BJ (cell line): ENCODE measurements at regions of chr18 and their contacts with region 1.

Region 1: GRCh38 chr18:21191596-21192307 is 50.3 kb upstream of the GREB1L start:
- DNase-seq: no peak
- H3K4me3 ChIP-seq: no peak overlapping the region
- H3K27me3 ChIP-seq: no peaks in the 10 kb centered on the region; the same call in 1 of the 2 replicates
- CTCF ChIP-seq: peak; percentile 89

Region 2: GRCh38 chr18:20963027-20963426 is 228.7 kb before region 1 on chr18:
- CTCF ChIA-PET with region 1: interaction called, 12 read pairs
- POLR2A ChIA-PET with region 1: no interaction called
- DNase-seq: no peak
- H3K4me3 ChIP-seq: no peak overlapping the region
- H3K27me3 ChIP-seq: no peaks in the 10 kb centered on the region
- CTCF ChIP-seq: no peak

Region 3: GRCh38 chr18:21179590-21180220 is 12.0 kb before region 1 on chr18:
- CTCF ChIA-PET with region 1: interaction called, 18 read pairs
- POLR2A ChIA-PET with region 1: no interaction called
- DNase-seq: no peak
- H3K4me3 ChIP-seq: no peak overlapping the region
- H3K27me3 ChIP-seq: no peaks in the 10 kb centered on the region; the same call in 1 of the 2 replicates
- CTCF ChIP-seq: peak; percentile 81

Region 4: DNA sequence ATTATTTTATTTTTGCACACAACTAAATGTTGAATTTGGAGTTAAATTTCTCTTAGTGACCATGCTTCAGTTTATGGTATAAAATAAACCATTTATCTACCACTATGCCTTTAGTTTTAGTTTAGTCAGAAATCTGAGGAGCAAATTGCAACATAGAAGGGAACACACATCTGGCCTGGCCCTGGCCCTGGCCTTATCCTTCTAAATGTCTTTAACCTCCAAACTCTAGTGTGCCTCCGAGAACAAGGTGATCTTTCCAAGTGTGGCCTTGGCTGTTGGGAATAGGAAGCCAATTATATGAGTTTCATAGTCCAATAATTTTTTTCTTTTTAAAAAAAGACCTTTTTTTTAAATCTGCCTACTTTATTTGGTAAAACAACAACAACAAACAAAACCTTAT is 18.5 kb after region 1 on chr18:
- CTCF ChIA-PET with region 1: interaction called, 15 read pairs
- POLR2A ChIA-PET with region 1: no interaction called
- DNase-seq: no peak
- H3K4me3 ChIP-seq: no peak overlapping the region
- H3K27me3 ChIP-seq: no peaks in the 10 kb centered on the region
- CTCF ChIP-seq: no peak

Region 5: GRCh38 chr18:21450913-21451312 is 259.2 kb after region 1 on chr18:
- CTCF ChIA-PET with region 1: interaction called, 207 read pairs
- POLR2A ChIA-PET with region 1: no interaction called
- DNase-seq: no peak
- H3K4me3 ChIP-seq: no peak overlapping the region
- H3K27me3 ChIP-seq: no peaks in the 10 kb centered on the region
- CTCF ChIP-seq: no peak

Region 6: DNA sequence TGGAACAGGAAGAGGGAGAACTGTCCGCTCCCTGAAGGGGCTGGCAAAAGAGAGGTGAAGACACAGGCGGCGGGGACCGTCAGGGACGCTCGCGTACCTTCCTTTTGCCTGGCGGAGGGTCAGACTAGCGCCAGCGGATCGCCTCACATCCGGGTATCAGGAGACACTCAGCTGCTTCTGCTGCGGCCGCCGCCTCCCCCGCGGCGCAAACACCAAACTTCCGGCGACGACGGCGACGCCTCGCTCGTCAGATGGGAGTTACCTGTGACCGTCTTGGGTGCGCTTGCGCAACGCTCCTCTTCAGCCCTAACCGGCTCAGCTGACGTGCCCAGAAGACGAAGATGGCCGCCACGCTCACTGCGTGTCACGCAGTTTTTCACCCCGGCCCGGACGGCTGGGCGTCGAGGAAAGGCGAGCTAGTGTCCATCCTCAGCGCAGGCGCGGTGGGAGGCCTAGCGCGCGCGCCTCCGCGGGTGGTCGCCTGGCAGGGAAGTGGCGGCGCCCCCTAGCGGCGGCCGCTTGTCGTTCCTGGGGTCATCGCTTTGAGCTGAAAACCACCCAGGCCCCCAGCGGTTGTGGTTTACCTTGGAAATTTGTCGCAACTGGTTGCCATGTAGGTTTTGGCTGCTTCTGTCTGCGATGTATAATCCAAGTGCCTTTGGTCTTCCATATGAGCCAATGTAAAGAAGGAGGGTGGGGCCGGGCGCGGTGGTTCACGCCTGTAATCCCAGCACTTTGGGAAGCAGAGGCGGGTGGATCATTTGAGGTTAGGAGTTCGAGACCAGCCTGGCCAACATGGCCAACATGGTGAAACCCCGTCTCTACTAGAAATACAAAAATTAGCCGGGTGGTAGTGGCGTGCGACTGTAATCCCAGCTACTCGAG is 409.0 kb after region 1 on chr18 and contains the start of gene ESCO1:
- CTCF ChIA-PET with region 1: interaction called, 13 read pairs
- POLR2A ChIA-PET with region 1: no interaction called
- DNase-seq: peak; percentile 90
- H3K4me3 ChIP-seq: peak within 1 kb of the TSS; percentile 94
- H3K27me3 ChIP-seq: no peaks in the 10 kb centered on the region
- CTCF ChIP-seq: peak; percentile 84
- polyA plus RNA-seq, gene ESCO1: 2.0 and 5.0 TPM in 2 replicates